SK-N-SH (cell line): ENCODE measurements at regions of chr16 and their contacts with region 1.

Region 1: GRCh38 chr16:67268136-67268579 is 11.2 kb upstream of the PLEKHG4 start:
- DNase-seq: no peak
- H3K4me3 ChIP-seq: no peak overlapping the region
- H3K27ac ChIP-seq: peak overlapping the region in 1 of 2 experiments; percentile 77; a peak in 2 of 4 replicates
- H3K4me1 ChIP-seq: peaks cover 0 to 7% of the 10 kb centered on the region in 2 experiments; a peak in 1 of 4 replicates
- H3K27me3 ChIP-seq: no peaks in the 10 kb centered on the region
- CTCF ChIP-seq: no peak
- EP300 ChIP-seq: peak in 1 of 2 experiments; percentile 56; a peak in 1 of 4 replicates
- RAD21 ChIP-seq: no peak

Region 2: GRCh38 chr16:67226804-67227557 is 41.2 kb before region 1 on chr16 and contains the start of gene TMEM208:
- CTCF ChIA-PET with region 1: no interaction called
- POLR2A ChIA-PET with region 1: no interaction called
- DNase-seq: peak; percentile 97
- H3K4me3 ChIP-seq: peak within 1 kb of the TSS; percentile 92 to 100
- H3K27ac ChIP-seq: peak within 1 kb of the TSS; percentile 72 to 83
- H3K4me1 ChIP-seq: peaks cover 0 to 22% of the 10 kb centered on the region in 2 experiments; a peak in 2 of 4 replicates
- H3K27me3 ChIP-seq: no peaks in the 10 kb centered on the region
- CTCF ChIP-seq: peak; percentile 48
- EP300 ChIP-seq: no peak
- RAD21 ChIP-seq: no peak
- polyA plus RNA-seq, gene TMEM208: 98.2 and 130 TPM in 2 replicates

Region 3: GRCh38 chr16:67279296-67280089 is 11.3 kb after region 1 on chr16 and contains the start of gene PLEKHG4:
- CTCF ChIA-PET with region 1: interaction called, 12 read pairs
- POLR2A ChIA-PET with region 1: no interaction called
- DNase-seq: peak; percentile 99
- H3K4me3 ChIP-seq: peak within 1 kb of the TSS; percentile 64
- H3K27ac ChIP-seq: peak within 1 kb of the TSS; percentile 59 to 100
- H3K4me1 ChIP-seq: peaks cover 25 to 41% of the 10 kb centered on the region in 2 experiments; a peak in 3 of 4 replicates
- H3K27me3 ChIP-seq: no peaks in the 10 kb centered on the region
- CTCF ChIP-seq: peak; percentile 62
- EP300 ChIP-seq: 0 out of 4 replicates have a peak, but pooled peaks of 1 of the 2 experiments have one; percentile 8
- RAD21 ChIP-seq: peak; percentile 54
- polyA plus RNA-seq, gene PLEKHG4: 65.5 and 87.0 TPM in 2 replicates